Psoas muscle (tissue), 8 donors: ENCODE measurements at regions of chr1 and their contacts with region 1.

Region 1: DNA sequence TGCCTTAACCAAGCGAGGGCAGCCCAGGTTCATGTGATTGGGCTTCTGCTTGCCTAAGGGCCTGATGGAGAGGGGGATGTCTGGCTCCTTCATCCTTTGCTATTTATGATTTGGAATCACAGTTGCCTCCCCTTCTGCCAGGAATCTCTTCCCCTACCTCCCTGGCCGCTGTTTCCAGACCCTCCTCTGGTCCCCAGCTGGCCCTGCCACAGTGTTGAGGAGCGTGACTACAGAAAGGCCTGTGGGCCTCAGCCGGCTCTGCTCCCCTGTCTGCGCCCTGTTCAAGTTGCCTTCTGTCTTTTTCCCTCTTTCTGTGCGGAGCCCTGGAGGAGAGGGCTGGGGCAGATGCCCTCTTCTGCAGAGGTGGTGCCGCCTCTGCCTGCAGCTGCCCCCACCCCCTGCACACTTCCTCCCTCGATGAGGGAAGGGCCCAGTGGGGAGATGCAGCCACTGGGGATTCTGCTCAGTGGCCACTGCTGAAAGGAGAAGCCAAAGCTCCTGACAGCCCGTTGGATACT is 6.5 kb downstream of the KIAA1614 start:
- DNase-seq: no peak
- ATAC-seq: no peak
- H3K4me3 ChIP-seq: no peak overlapping the region
- H3K27ac ChIP-seq: no peak overlapping the region
- H3K4me1 ChIP-seq: no peaks in the 10 kb centered on the region
- H3K27me3 ChIP-seq: peaks cover 0 to 1% (median 0%) of the 10 kb centered on the region in 3 donors
- CTCF ChIP-seq: no peak

Region 2: GRCh38 chr1:180898441-180899219 is 20.6 kb before region 1 on chr1:
- intact Hi-C with region 1: loop called in 1 of 2 experiments (anchors 1 kb)
- DNase-seq: no peak
- ATAC-seq: no peak
- H3K4me3 ChIP-seq: no peak overlapping the region
- H3K27ac ChIP-seq: no peak overlapping the region
- H3K4me1 ChIP-seq: no peaks in the 10 kb centered on the region
- H3K27me3 ChIP-seq: no peaks in the 10 kb centered on the region
- CTCF ChIP-seq: no peak

Region 3: DNA sequence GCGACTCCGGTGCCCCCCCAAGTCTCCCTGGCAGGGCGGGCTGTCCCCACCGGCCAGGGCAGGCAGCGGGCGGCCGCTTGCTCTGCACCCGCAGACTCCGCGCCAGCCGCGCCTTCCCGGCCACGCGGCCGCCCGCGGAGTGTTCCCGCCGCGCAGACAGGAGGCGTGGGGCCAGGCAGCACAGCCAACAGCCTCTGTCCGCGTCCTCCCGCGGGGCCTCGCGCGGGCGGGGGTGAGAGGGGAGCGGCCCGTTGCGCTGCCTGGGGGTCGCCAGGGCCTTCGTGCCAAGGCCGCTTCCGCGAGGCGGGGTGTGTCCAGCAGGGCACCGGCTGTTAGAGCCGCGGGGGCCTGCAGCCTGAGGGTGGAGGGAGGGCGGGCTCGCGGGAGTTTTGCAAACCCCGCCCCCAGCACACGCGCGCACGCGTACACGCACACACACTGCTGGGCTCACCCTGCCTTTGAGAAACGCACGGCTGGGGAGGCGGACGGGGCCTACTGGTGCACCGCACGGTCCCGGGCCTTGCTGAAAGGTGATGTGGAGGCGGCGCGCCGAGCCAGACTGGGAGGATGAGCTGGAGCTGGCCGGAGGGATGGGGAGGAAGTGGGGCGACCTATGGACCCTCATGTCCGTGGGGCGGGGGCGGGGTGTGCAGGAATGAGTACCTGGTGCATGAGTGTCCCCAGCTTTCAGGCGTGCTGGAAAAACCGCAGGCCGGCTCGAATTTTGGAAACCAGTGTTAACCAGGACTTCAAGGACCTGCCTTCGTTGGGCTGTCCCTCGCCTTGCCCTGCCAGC is 35.0 kb after region 1 on chr1:
- intact Hi-C with region 1: no loop called
- DNase-seq: peak; percentile 78
- ATAC-seq: peak; percentile 65 to 82 (median 70)
- H3K4me3 ChIP-seq: peak overlapping the region; percentile 67
- H3K27ac ChIP-seq: peak overlapping the region; percentile 74
- H3K4me1 ChIP-seq: peaks cover 39% of the 10 kb centered on the region
- H3K27me3 ChIP-seq: no peaks in the 10 kb centered on the region
- CTCF ChIP-seq: no peak